Natural killer cell (primary cell): ENCODE measurements at regions of chr13 and their contacts with region 1.

Region 1: DNA sequence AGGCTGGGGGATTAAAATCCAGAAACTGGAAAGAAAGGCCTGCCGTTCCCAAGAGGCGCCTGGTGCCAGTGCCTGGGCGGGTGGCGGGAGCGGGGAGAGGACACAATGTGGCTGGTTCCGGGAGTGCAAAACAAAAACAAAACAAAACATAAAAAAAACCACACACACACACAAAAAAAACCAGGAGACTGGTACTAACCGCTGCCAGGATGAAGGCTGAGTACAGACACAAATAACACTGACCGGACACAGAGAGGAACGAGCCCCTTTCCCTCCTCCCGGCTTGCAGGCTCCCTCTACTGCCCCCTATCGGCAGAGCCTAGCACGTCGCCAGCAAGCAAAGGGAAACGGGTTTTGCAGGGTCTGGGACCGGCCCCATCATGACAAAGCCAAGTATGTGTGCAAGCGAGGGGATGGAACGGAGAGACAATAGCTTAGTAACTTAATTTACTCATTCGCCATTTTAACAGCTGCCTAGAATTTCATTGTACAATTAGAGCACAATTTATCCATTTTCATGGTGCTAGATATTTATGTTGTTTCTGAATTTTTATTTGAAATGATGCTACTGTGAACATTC is 17.9 kb upstream of the ZDHHC20 start:
- DNase-seq: peak; percentile 77 to 90
- ATAC-seq: peak; percentile 91 to 96 (median 94)
- H3K4me3 ChIP-seq: peak overlapping the region; percentile 34
- H3K4me3 Mint-ChIP-seq: peak overlapping the region; percentile 86
- H3K27ac ChIP-seq: no peak overlapping the region
- H3K27ac Mint-ChIP-seq: peak overlapping the region; percentile 55 to 87
- H3K4me1 ChIP-seq: peaks cover 6% of the 10 kb centered on the region
- H3K4me1 Mint-ChIP-seq: peaks cover 8 to 17% of the 10 kb centered on the region in 2 donors
- H3K27me3 ChIP-seq: no peaks in the 10 kb centered on the region
- H3K27me3 Mint-ChIP-seq: peaks cover 0 to 3% of the 10 kb centered on the region in 2 donors
- CTCF ChIP-seq: peak; percentile 99

Region 2: GRCh38 chr13:20945952-20946383 is 531.0 kb before region 1 on chr13:
- intact Hi-C with region 1: loop called (anchors 1 kb)
- DNase-seq: no peak
- ATAC-seq: peak in 2 of 3 donors; percentile 47 to 51
- H3K4me3 ChIP-seq: no peak overlapping the region
- H3K4me3 Mint-ChIP-seq: no peak overlapping the region
- H3K27ac ChIP-seq: no peak overlapping the region
- H3K27ac Mint-ChIP-seq: no peak overlapping the region
- H3K4me1 ChIP-seq: peaks cover 6% of the 10 kb centered on the region
- H3K4me1 Mint-ChIP-seq: peaks cover 9 to 16% of the 10 kb centered on the region in 2 donors
- H3K27me3 ChIP-seq: no peaks in the 10 kb centered on the region
- H3K27me3 Mint-ChIP-seq: peaks cover 42 to 53% of the 10 kb centered on the region in 2 donors
- CTCF ChIP-seq: no peak

Region 3: GRCh38 chr13:21106089-21106488 is 370.9 kb before region 1 on chr13:
- intact Hi-C with region 1: loop called (anchors 1 kb)
- DNase-seq: no peak
- ATAC-seq: no peak
- H3K4me3 ChIP-seq: no peak overlapping the region
- H3K4me3 Mint-ChIP-seq: no peak overlapping the region
- H3K27ac ChIP-seq: no peak overlapping the region
- H3K27ac Mint-ChIP-seq: no peak overlapping the region
- H3K4me1 ChIP-seq: no peaks in the 10 kb centered on the region
- H3K4me1 Mint-ChIP-seq: no peaks in the 10 kb centered on the region
- H3K27me3 ChIP-seq: no peaks in the 10 kb centered on the region
- H3K27me3 Mint-ChIP-seq: no peaks in the 10 kb centered on the region
- CTCF ChIP-seq: no peak

Region 4: DNA sequence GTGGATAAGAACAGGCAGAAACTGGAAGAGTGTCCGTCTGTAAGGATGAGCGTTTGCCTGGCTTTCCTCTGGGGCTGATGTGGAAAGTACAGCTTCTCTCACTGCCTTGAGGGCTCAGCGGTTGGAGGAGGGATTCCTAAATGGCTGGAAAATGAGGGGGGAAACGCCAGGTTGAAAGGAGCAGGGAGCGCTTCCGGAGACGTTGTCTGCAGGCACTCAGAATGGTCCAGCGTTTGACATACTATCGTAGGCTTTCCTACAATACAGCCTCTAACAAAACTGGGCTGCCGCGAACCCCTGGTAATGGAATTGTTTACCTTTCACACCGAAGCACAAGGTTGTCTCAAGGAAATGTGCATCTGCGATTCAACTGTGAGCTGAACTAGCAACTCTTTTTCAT is 260.7 kb before region 1 on chr13:
- intact Hi-C with region 1: no loop called
- DNase-seq: no peak
- ATAC-seq: no peak
- H3K4me3 ChIP-seq: no peak overlapping the region
- H3K4me3 Mint-ChIP-seq: no peak overlapping the region
- H3K27ac ChIP-seq: no peak overlapping the region
- H3K27ac Mint-ChIP-seq: no peak overlapping the region
- H3K4me1 ChIP-seq: peaks cover 12% of the 10 kb centered on the region
- H3K4me1 Mint-ChIP-seq: peaks cover 18 to 19% of the 10 kb centered on the region in 2 donors
- H3K27me3 ChIP-seq: peaks cover 3% of the 10 kb centered on the region
- H3K27me3 Mint-ChIP-seq: peaks cover 38 to 64% of the 10 kb centered on the region in 2 donors
- CTCF ChIP-seq: no peak

Region 5: DNA sequence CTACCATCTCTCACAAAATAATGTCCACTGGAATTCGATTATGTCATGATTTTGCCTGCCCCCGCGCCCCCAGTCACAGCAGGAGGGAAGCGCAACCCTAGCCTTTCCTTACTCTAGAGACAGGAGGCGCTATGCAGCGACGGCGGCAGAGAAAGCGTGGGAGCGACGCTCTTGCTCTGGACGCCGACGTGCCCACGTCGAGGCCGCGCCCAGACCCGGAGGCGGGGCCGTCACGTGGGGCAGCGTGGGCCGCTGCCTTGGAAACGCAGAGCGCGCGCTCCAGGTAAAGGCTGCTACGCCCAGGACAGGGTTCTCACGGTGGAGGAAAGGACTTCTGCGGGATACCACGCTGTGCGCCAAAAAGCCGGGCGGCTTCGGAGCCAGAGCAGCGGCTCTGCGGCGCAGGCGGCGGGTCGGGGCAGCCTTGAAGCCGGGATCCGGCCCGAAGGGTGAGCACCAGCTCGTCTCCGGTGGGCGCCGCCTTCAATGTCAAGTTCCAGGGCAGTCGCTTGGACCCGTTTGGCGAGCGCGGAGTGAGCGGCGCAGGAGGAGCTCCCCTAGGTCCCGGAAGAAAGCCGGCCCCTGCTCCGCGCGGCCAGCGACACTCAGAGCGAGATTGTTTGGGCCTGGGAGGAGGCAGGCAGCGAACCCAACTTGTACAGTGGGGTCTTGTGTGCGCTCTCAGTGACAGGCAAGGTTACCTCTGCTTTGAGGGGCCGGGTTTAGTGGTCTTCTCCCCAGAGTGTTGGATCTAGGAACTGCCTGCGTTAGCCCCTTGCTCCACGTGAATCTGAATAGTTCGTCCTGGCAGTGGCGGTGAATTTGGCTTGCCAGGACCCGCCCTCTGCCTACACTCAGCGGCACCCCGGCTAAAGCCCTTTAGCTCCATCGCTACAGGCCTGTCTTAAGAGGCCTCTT is 178.8 kb before region 1 on chr13:
- intact Hi-C with region 1: loop called (anchors 1 kb)
- DNase-seq: peak; percentile 79 to 95
- ATAC-seq: peak; percentile 95 to 100 (median 98)
- H3K4me3 ChIP-seq: peak overlapping the region; percentile 66
- H3K4me3 Mint-ChIP-seq: peak overlapping the region; percentile 95
- H3K27ac ChIP-seq: peak overlapping the region; percentile 56
- H3K27ac Mint-ChIP-seq: peak overlapping the region; percentile 76 to 89
- H3K4me1 ChIP-seq: peaks cover 14% of the 10 kb centered on the region
- H3K4me1 Mint-ChIP-seq: peaks cover 23 to 24% of the 10 kb centered on the region in 2 donors
- H3K27me3 ChIP-seq: no peaks in the 10 kb centered on the region
- H3K27me3 Mint-ChIP-seq: peaks cover 0 to 2% of the 10 kb centered on the region in 2 donors
- CTCF ChIP-seq: peak; percentile 80

Region 6: GRCh38 chr13:21603531-21604448 is 126.8 kb after region 1 on chr13 and contains the start of gene MICU2:
- intact Hi-C with region 1: loop called (anchors 5 kb)
- DNase-seq: peak; percentile 92 to 98
- ATAC-seq: peak; percentile 90 to 97 (median 92)
- H3K4me3 ChIP-seq: peak within 1 kb of the TSS; percentile 85
- H3K4me3 Mint-ChIP-seq: peak within 1 kb of the TSS; percentile 90
- H3K27ac ChIP-seq: peak within 1 kb of the TSS; percentile 97
- H3K27ac Mint-ChIP-seq: peak within 1 kb of the TSS; percentile 91 to 93
- H3K4me1 ChIP-seq: peaks cover 15% of the 10 kb centered on the region
- H3K4me1 Mint-ChIP-seq: peaks cover 38 to 42% of the 10 kb centered on the region in 2 donors
- H3K27me3 ChIP-seq: peaks cover 5% of the 10 kb centered on the region
- H3K27me3 Mint-ChIP-seq: peaks cover 8 to 12% of the 10 kb centered on the region in 2 donors
- CTCF ChIP-seq: no peak
- total RNA-seq, gene MICU2: 40.2 to 47.1 (median 41.4) TPM